Right ventricle myocardium inferior (tissue), 1 donor: ENCODE measurements at regions of chr2 and their contacts with region 1.

Region 1: GRCh38 chr2:182463760-182464159 is 36.9 kb upstream of the PDE1A start:
- DNase-seq: no peak
- ATAC-seq: peak; percentile 91

Region 2: GRCh38 chr2:182584462-182584861 is 120.7 kb after region 1 on chr2:
- intact Hi-C with region 1: loop called (anchors 2 kb)
- DNase-seq: peak; percentile 68
- ATAC-seq: peak; percentile 96

Region 3: DNA sequence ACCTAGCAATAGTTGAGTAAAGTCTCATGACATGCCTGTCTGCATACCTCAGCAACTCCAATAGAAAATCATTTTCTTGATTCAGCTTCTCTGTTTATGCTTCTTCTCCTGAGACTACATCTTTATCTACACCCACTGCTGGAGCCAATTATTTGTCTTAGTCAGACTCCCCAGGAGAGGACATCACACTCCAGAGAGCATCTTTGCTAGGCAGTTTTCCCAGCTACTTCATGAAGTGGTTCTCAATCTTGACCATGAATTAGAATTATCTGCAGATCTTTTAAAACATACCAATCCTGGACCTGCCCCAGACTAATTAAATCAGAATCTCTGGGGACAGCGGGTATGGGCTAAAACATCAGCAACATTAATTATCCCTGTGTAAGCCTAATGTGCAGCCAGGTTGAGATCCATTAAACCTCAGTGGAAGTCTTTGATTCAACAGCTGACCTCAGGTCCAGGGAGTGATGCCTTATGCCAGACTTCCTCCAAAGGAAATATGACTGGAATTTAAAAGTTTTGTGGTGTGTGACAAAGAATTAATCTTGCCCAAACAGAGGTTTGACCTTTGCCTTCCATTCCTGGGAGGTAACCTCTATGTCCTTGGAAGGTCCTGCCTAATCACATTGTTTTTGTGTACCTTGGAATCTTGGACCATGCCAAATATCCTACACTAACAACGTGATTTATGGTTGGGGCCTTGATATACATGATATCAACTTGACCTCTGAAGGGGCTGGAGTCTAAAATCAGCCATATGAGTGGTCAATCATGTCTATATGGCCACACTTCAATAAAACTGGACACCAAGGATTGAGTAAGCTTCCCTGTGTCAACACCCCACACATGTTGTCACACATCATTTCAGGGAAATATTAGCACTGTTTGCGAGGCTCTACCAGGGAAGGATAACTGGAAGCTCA is 153.0 kb after region 1 on chr2:
- intact Hi-C with region 1: loop called (anchors 10 kb)
- DNase-seq: no peak
- ATAC-seq: no peak